Naive thymus-derived CD4-positive, alpha-beta T cell (primary cell): ENCODE measurements at regions of chr2 and their contacts with region 1.

Region 1: DNA sequence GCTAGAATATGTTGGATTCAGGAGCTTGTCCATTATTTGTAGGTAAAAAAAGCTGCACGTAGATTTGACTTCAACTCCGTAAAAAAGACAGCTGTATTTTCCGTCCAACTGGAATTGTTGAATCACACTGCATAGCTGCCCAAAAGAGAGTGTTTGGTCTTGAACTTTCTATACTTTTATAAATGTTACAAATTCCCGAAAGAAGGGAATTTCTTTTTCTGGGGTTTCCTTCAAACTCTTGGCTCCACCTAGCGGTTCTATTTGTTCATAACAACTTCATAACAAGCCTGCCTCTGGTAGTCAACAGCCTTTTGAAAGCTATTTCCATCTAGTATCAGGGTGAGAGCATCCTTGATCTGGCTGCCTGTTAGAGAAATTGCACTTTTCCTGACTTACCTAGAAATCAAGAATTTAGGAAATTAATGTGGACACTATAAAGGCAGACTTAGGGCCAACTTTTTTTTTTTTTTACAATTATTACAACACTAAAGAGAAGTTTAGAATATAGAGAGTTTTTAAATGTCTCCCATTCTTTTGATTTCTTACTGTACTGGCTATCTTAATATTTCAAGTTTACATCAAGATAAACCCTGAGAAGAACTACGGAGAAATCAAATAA is 48.1 kb downstream of the TMEM185B start:
- DNase-seq: peak in 7 of 9 donors; percentile 37 to 63 (median 56)
- ATAC-seq: no peak
- H3K4me3 ChIP-seq: no peak overlapping the region
- H3K4me3 Mint-ChIP-seq: peak overlapping the region in 5 of 10 donors; percentile 7 to 50 (median 20)
- H3K27ac ChIP-seq: peak overlapping the region; percentile 79
- H3K27ac Mint-ChIP-seq: peak overlapping the region in 8 of 9 donors; percentile 84 to 99 (median 96)
- H3K4me1 ChIP-seq: peaks cover 17 to 49% of the 10 kb centered on the region in 2 donors
- H3K4me1 Mint-ChIP-seq: peaks cover 13 to 53% (median 43%) of the 10 kb centered on the region in 7 donors
- H3K27me3 ChIP-seq: no peaks in the 10 kb centered on the region
- H3K27me3 Mint-ChIP-seq: peaks cover 0 to 3% (median 0%) of the 10 kb centered on the region in 5 donors

Region 2: DNA sequence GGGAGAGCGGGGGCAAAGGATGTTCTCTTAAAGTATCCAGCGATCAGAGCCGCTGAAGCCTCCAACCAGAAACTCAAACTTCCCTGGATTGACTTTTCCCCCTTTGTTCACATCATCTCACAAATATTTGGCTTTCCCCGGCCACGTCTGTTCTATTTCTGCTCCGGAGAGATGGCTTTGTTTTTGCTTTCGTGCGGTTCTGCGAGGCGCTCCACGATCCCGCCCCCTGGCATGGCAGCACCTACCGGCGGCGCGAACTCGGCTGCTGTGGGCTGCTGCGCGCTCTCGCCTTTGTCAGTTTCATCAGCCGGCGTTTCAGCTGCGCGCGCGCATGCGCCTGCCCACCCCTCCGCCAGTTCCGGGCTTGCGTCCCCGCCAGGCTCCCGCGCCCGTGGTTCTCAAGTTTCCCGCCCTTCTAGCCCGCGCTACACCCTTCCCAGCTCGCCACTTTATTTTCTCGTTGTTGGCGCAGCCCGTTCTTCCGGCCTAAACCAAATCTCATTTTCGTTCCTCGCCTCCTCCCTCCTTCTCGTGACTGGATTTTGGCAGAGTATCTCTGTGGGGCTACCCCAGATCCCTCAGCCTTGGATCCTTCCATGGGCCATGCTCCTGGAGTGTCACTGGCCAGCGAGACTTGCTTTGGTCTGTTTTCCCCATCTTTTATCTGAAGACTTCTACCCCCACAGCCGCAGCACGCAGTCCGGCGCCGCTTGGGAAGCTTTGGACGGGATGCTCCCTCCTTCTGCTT is 1988.8 kb before region 1 on chr2:
- CTCF ChIA-PET with region 1: no interaction called
- POLR2A ChIA-PET with region 1: no interaction called
- intact Hi-C with region 1: loop called in 1 of 2 experiments (anchors 2 kb)
- DNase-seq: peak; percentile 77 to 91 (median 86)
- ATAC-seq: peak; percentile 97
- H3K4me3 ChIP-seq: peak overlapping the region; percentile 81
- H3K4me3 Mint-ChIP-seq: peak overlapping the region; percentile 89 to 98 (median 94)
- H3K27ac ChIP-seq: peak overlapping the region; percentile 74
- H3K27ac Mint-ChIP-seq: peak overlapping the region; percentile 88 to 98 (median 90)
- H3K4me1 ChIP-seq: peaks cover 6 to 9% of the 10 kb centered on the region in 2 donors
- H3K4me1 Mint-ChIP-seq: peaks cover 7 to 25% (median 21%) of the 10 kb centered on the region in 7 donors
- H3K27me3 ChIP-seq: no peaks in the 10 kb centered on the region
- H3K27me3 Mint-ChIP-seq: peaks cover 0 to 2% (median 0%) of the 10 kb centered on the region in 5 donors

Region 3: DNA sequence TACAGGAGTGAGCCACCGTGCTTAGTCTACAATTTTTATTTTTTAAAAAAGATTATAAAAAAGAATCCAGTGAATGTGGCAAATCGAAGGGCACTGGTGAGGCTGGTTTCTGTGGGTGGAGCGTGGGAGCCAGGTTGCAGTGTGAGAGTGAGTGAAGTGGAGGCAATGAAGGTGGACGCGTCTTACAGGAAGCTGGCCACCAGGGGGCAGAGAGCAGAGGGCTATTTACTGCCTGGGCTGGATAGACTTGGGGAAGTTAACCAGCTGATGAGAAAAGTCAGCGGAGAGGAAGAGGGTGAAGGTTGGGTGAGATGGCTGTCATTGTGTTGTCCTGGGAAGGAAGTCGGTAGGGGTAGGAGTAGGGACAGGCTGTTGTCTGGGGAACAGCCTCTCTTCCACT is 657.6 kb before region 1 on chr2:
- CTCF ChIA-PET with region 1: no interaction called
- POLR2A ChIA-PET with region 1: no interaction called
- intact Hi-C with region 1: loop called in 1 of 2 experiments (anchors 2 kb)
- DNase-seq: peak in 5 of 9 donors; percentile 4 to 40 (median 18)
- ATAC-seq: peak; percentile 59
- H3K4me3 ChIP-seq: no peak overlapping the region
- H3K4me3 Mint-ChIP-seq: no peak overlapping the region
- H3K27ac ChIP-seq: no peak overlapping the region
- H3K27ac Mint-ChIP-seq: no peak overlapping the region
- H3K4me1 ChIP-seq: no peaks in the 10 kb centered on the region
- H3K4me1 Mint-ChIP-seq: no peaks in the 10 kb centered on the region
- H3K27me3 ChIP-seq: no peaks in the 10 kb centered on the region
- H3K27me3 Mint-ChIP-seq: peaks cover 13 to 55% (median 41%) of the 10 kb centered on the region in 5 donors

Region 4: DNA sequence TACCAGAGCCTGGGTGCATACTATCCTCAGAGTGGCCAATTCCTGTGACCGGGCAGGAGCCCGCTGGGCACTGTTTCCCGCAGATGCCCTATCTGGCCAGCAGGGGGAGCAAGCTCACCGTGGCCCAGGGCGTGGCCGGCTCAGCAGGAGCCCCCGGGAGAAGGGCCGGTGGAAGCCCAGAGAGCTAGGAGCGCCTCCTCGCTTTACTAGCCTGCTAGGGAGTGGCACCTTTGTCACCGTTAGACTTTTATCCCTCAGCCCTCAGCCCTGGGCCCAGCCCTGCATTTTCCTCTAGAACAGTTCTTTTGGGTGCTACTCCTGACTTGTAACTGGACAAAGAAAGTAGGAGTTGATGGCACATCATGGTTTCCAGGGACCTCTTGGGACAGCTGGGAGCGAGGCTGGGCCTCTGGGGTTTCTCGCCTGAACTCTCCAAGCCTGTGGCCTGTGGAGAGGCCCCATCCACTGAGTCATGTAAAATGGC is 472.1 kb before region 1 on chr2:
- CTCF ChIA-PET with region 1: interaction called, 33 read pairs
- POLR2A ChIA-PET with region 1: interaction called, 8 read pairs
- intact Hi-C with region 1: loop called (anchors 1 kb)
- DNase-seq: peak; percentile 26 to 69 (median 53)
- ATAC-seq: peak; percentile 92
- H3K4me3 ChIP-seq: peak overlapping the region; percentile 16
- H3K4me3 Mint-ChIP-seq: no peak overlapping the region
- H3K27ac ChIP-seq: no peak overlapping the region
- H3K27ac Mint-ChIP-seq: peak overlapping the region in 2 of 9 donors; percentile 6 to 56
- H3K4me1 ChIP-seq: peaks cover 6 to 9% of the 10 kb centered on the region in 2 donors
- H3K4me1 Mint-ChIP-seq: peaks cover 0 to 23% (median 13%) of the 10 kb centered on the region in 7 donors
- H3K27me3 ChIP-seq: no peaks in the 10 kb centered on the region
- H3K27me3 Mint-ChIP-seq: peaks cover 0 to 4% (median 0%) of the 10 kb centered on the region in 5 donors

Region 5: GRCh38 chr2:119929537-119929936 is 245.5 kb before region 1 on chr2:
- CTCF ChIA-PET with region 1: interaction called, 5 read pairs
- POLR2A ChIA-PET with region 1: interaction called, 7 read pairs
- intact Hi-C with region 1: loop called (anchors 1 to 5 kb)
- DNase-seq: peak in 7 of 9 donors; percentile 36 to 72 (median 57)
- ATAC-seq: peak; percentile 90
- H3K4me3 ChIP-seq: peak overlapping the region; percentile 53
- H3K4me3 Mint-ChIP-seq: peak overlapping the region; percentile 61 to 93 (median 85)
- H3K27ac ChIP-seq: peak overlapping the region; percentile 76
- H3K27ac Mint-ChIP-seq: peak overlapping the region; percentile 88 to 98 (median 93)
- H3K4me1 ChIP-seq: peaks cover 34 to 60% of the 10 kb centered on the region in 2 donors
- H3K4me1 Mint-ChIP-seq: peaks cover 34 to 84% (median 75%) of the 10 kb centered on the region in 7 donors
- H3K27me3 ChIP-seq: no peaks in the 10 kb centered on the region
- H3K27me3 Mint-ChIP-seq: no peaks in the 10 kb centered on the region

Region 6: DNA sequence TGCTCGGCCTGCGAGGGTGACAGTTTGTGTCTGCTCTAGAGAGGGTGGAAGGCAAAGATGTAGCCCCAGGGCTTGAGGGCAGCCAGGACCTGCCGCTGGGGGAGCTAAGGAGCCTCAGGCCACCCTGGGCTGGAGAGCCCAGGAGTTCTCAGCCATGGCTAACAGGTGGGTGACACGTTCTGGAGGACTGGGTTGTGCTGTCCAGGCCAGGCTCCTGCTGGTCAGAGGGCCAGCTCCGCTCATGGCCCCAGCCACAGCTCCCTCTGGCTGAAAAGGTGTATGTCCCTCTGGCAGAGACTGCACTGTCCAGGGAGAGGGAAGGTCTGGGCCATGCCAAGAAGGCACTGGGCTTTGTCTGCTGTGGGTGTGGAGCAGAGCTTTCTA is 28.9 kb after region 1 on chr2:
- CTCF ChIA-PET with region 1: no interaction called
- POLR2A ChIA-PET with region 1: no interaction called
- intact Hi-C with region 1: no loop called
- DNase-seq: no peak
- ATAC-seq: no peak
- H3K4me3 ChIP-seq: no peak overlapping the region
- H3K4me3 Mint-ChIP-seq: no peak overlapping the region
- H3K27ac ChIP-seq: no peak overlapping the region
- H3K27ac Mint-ChIP-seq: no peak overlapping the region
- H3K4me1 ChIP-seq: no peaks in the 10 kb centered on the region
- H3K4me1 Mint-ChIP-seq: peaks cover 0 to 11% (median 0%) of the 10 kb centered on the region in 7 donors
- H3K27me3 ChIP-seq: no peaks in the 10 kb centered on the region
- H3K27me3 Mint-ChIP-seq: peaks cover 0 to 2% (median 0%) of the 10 kb centered on the region in 5 donors

Region 7: GRCh38 chr2:120231974-120232635 is 57.0 kb after region 1 on chr2:
- CTCF ChIA-PET with region 1: interaction called, 8 read pairs
- POLR2A ChIA-PET with region 1: interaction called, 43 read pairs
- intact Hi-C with region 1: loop called (anchors 1 to 2 kb)
- DNase-seq: peak; percentile 19 to 82 (median 77)
- ATAC-seq: peak; percentile 93
- H3K4me3 ChIP-seq: peak overlapping the region; percentile 72
- H3K4me3 Mint-ChIP-seq: peak overlapping the region; percentile 86 to 100 (median 96)
- H3K27ac ChIP-seq: peak overlapping the region; percentile 81
- H3K27ac Mint-ChIP-seq: peak overlapping the region; percentile 93 to 98 (median 96)
- H3K4me1 ChIP-seq: peaks cover 19 to 29% of the 10 kb centered on the region in 2 donors
- H3K4me1 Mint-ChIP-seq: peaks cover 15 to 65% (median 59%) of the 10 kb centered on the region in 7 donors
- H3K27me3 ChIP-seq: no peaks in the 10 kb centered on the region
- H3K27me3 Mint-ChIP-seq: no peaks in the 10 kb centered on the region

Region 8: GRCh38 chr2:120797421-120798221 is 622.5 kb after region 1 on chr2:
- CTCF ChIA-PET with region 1: no interaction called
- POLR2A ChIA-PET with region 1: no interaction called
- intact Hi-C with region 1: no loop called
- DNase-seq: no peak
- ATAC-seq: no peak
- H3K4me3 ChIP-seq: no peak overlapping the region
- H3K4me3 Mint-ChIP-seq: no peak overlapping the region
- H3K27ac ChIP-seq: no peak overlapping the region
- H3K27ac Mint-ChIP-seq: no peak overlapping the region
- H3K4me1 ChIP-seq: no peaks in the 10 kb centered on the region
- H3K4me1 Mint-ChIP-seq: peaks cover 0 to 5% (median 0%) of the 10 kb centered on the region in 7 donors
- H3K27me3 ChIP-seq: no peaks in the 10 kb centered on the region
- H3K27me3 Mint-ChIP-seq: peaks cover 0 to 6% (median 0%) of the 10 kb centered on the region in 5 donors

Region 9: GRCh38 chr2:121649596-121650314 is 1474.7 kb after region 1 on chr2:
- CTCF ChIA-PET with region 1: no interaction called
- POLR2A ChIA-PET with region 1: no interaction called
- intact Hi-C with region 1: loop called in 1 of 2 experiments (anchors 10 kb)
- DNase-seq: peak; percentile 89 to 99 (median 97)
- ATAC-seq: peak; percentile 97
- H3K4me3 ChIP-seq: peak overlapping the region; percentile 88
- H3K4me3 Mint-ChIP-seq: peak overlapping the region; percentile 92 to 100 (median 98)
- H3K27ac ChIP-seq: peak overlapping the region; percentile 90
- H3K27ac Mint-ChIP-seq: peak overlapping the region; percentile 98 to 100 (median 99)
- H3K4me1 ChIP-seq: peaks cover 10 to 11% of the 10 kb centered on the region in 2 donors
- H3K4me1 Mint-ChIP-seq: peaks cover 54 to 88% (median 76%) of the 10 kb centered on the region in 7 donors
- H3K27me3 ChIP-seq: no peaks in the 10 kb centered on the region
- H3K27me3 Mint-ChIP-seq: peaks cover 0 to 2% (median 0%) of the 10 kb centered on the region in 5 donors